PC-3 (cell line): ENCODE measurements at regions of chr11 and their contacts with region 1.

Region 1: GRCh38 chr11:18853086-18853720 is 61.6 kb upstream of the PTPN5 start:
- DNase-seq: peak; percentile 63
- ATAC-seq: peak; percentile 93
- H3K4me3 ChIP-seq: no peak overlapping the region
- H3K27ac ChIP-seq: no peak overlapping the region
- H3K4me1 ChIP-seq: no peaks in the 10 kb centered on the region; the same call in 1 of the 2 replicates
- H3K27me3 ChIP-seq: peaks cover 25% of the 10 kb centered on the region
- CTCF ChIP-seq: peak; percentile 78

Region 2: DNA sequence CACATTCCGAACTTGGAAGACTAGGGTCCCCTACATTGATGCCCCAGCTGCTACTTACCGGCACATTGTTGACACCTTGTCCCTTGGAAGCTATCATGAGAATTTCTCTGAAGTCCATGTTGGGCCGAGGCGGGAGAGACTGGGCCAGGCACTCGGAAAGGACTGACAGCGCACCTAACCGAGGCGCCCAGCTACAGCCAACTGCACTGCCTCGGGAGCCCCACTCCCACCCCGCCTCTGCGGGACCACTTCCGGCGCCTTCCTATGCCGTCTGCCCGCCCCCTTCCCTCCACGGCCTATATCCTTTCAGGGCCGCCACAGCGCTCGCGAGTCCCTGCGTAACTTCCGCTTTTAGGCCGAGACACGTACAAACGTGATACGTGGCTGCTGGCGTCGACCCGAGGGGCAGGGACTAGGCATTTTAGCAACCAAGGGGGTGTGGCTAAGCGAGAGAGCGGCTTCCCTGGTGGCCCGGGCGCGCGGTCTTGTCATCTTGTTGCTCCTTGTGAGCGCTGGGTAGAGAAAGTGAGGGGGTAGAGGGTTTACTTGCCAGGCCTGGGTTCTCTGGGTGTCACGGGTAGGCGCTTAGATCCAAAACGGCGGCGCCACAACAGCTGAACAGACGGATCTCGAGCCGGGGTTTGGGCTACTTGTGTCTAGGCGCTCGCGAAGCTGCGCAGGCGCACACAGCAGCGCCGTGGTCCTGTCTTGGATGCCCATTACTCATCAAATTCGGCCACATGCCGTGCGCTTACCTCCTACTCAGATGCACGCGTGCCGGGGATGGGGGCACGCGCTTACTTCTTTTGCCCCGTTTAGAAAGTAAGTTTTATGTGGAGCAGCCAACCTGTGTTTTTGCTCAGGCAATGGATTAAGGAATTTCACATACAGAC is 218.8 kb before region 1 on chr11 and contains the start of gene SPTY2D1:
- CTCF ChIA-PET with region 1: no interaction called
- POLR2A ChIA-PET with region 1: no interaction called
- intact Hi-C with region 1: no loop called
- DNase-seq: peak; percentile 98
- ATAC-seq: peak; percentile 94
- H3K4me3 ChIP-seq: peak within 1 kb of the TSS; percentile 86
- H3K27ac ChIP-seq: peak within 1 kb of the TSS; percentile 64
- H3K4me1 ChIP-seq: peaks cover 10% of the 10 kb centered on the region
- H3K27me3 ChIP-seq: no peaks in the 10 kb centered on the region
- CTCF ChIP-seq: no peak
- total RNA-seq, gene SPTY2D1: 15.6 and 16.6 TPM in 2 replicates

Region 3: GRCh38 chr11:18775492-18776292 is 77.5 kb before region 1 on chr11:
- CTCF ChIA-PET with region 1: no interaction called
- POLR2A ChIA-PET with region 1: no interaction called
- intact Hi-C with region 1: loop called (anchors 1 kb)
- DNase-seq: peak; percentile 79
- ATAC-seq: peak; percentile 97
- H3K4me3 ChIP-seq: no peak overlapping the region
- H3K27ac ChIP-seq: no peak overlapping the region
- H3K4me1 ChIP-seq: 0 out of 2 replicates have a peak, but pooled peaks cover 4% of the 10 kb centered on the region
- H3K27me3 ChIP-seq: no peaks in the 10 kb centered on the region
- CTCF ChIP-seq: peak; percentile 92